ENCODE measurements at regions of chr11 and their contacts with region 1.

Region 1: DNA sequence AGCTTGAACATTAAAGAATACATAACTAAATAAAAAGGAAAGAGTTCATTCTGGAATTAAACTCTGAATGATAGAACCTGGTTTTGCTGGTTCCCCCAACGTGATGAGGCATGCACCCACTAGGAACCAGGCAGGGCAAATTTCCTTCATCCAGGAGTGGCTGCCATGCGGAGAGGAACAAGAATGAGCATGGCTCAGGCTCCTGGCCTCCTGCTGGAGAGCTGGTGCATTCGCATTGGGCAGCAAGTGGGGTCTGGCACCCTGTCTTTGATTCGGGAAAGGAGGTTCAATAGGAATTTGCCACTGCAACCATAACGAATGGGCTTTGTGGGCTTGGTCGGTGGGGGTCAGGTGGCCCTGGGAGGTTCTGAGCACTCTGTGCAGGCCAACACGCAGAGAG is 169.8 kb upstream of the TENM4 start:
- DNase-seq: no peak

Region 2: DNA sequence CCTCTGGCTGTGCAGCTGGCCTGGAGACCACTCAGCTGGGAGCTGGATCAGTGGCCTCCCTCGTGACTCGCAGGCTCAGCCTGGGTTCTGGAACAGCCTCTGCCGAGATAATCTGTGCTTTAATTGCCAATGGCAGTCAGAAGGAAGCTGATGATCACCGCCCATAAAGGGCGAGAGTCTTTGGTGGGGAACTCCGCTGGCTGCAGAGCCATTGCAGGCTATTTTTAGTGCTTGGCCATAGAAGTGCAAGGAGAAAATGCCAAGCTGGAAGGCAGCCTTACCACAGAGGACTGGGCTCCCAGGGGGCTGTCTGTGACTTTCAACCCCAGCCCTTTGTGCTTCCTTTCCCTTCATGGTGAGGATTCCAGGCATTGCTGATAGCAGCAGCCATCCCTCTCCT is 107.7 kb before region 1 on chr11:
- intact Hi-C with region 1: loop called (anchors 10 kb)
- DNase-seq: no peak

Region 3: GRCh38 chr11:79546351-79546750 is 64.3 kb before region 1 on chr11:
- intact Hi-C with region 1: no loop called
- DNase-seq: no peak

Region 4: DNA sequence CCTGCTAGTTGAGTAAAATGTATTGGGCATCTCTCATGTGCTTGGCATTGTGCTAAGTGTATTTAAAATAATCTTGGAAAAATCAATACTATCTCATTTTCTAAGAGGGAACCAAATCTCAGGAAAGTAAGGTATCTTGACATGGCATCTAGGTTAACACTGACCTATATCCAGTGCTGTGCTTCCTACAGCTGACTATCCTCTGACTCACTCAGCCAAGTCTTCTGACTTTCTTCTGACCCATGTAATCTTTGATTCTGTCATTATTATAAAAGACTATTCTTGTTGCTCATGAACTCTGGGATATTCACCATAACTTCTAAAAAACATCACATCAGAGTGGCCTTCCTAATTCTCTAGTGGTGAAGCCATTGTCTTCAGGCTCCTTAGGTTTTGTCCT is 134.3 kb after region 1 on chr11:
- intact Hi-C with region 1: no loop called
- DNase-seq: no peak

Measured in cardiac septum (tissue), 1 donor.